ENCODE measurements at regions of chr5 and their contacts with region 1.

Region 1: GRCh38 chr5:6745706-6746222 is 32.5 kb downstream of the TENT4A start:
- DNase-seq: peak; percentile 87
- ATAC-seq: peak; percentile 83
- H3K4me3 ChIP-seq: no peak overlapping the region
- H3K27ac ChIP-seq: no peak overlapping the region
- H3K4me1 ChIP-seq: peaks cover 5% of the 10 kb centered on the region
- H3K27me3 ChIP-seq: no peaks in the 10 kb centered on the region
- CTCF ChIP-seq: peak; percentile 97

Region 2: GRCh38 chr5:6393596-6394194 is 352.1 kb before region 1 on chr5:
- CTCF ChIA-PET with region 1: no interaction called
- POLR2A ChIA-PET with region 1: no interaction called
- intact Hi-C with region 1: no loop called
- DNase-seq: peak; percentile 41
- ATAC-seq: no peak
- H3K4me3 ChIP-seq: no peak overlapping the region
- H3K27ac ChIP-seq: no peak overlapping the region
- H3K4me1 ChIP-seq: no peaks in the 10 kb centered on the region
- H3K27me3 ChIP-seq: peaks cover 3% of the 10 kb centered on the region; the same call in 1 of the 2 replicates
- CTCF ChIP-seq: no peak

Region 3: DNA sequence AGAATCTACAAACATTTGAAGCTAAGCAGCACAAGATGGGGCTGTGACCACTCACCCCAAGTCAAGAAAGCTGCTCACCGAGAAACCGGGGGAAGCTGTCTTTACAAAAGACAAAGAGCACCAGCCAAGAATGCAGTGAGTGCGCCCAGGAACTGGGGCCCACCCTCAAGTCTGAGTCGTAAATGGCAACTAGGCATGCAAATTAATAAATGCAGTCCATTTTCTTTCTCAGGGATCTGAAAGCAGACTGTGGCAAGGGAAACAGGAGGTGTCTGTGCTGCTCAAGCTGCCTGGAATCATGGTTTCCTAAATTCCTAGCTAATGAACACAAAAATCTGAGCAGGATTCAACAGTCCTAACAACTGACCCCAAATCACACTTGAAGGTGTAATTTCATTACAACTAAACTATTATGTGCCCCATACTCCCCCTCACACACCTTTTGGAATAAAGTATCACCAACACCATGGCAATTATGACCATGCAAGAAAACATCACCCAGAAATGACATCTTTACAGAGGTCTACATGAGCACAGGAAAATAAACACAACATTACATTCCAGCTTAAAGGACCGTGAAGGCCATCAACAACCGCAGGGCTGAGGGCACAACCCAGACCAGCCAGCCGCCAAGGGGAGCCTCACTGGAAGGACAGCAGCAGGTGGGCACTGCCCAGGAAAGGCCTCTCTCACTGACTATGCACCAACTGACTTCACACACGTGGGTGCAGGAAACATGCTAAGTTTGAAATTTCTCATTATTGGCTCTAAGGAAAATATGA is 130.5 kb before region 1 on chr5:
- CTCF ChIA-PET with region 1: no interaction called
- POLR2A ChIA-PET with region 1: interaction called, 3 read pairs
- intact Hi-C with region 1: loop called (anchors 5 kb)
- DNase-seq: no peak
- ATAC-seq: no peak
- H3K4me3 ChIP-seq: no peak overlapping the region
- H3K27ac ChIP-seq: no peak overlapping the region
- H3K4me1 ChIP-seq: no peaks in the 10 kb centered on the region
- H3K27me3 ChIP-seq: no peaks in the 10 kb centered on the region
- CTCF ChIP-seq: no peak

Region 4: GRCh38 chr5:6712577-6713275 is 33.0 kb before region 1 on chr5:
- CTCF ChIA-PET with region 1: no interaction called
- POLR2A ChIA-PET with region 1: no interaction called
- intact Hi-C with region 1: loop called (anchors 2 kb)
- DNase-seq: peak; percentile 100
- ATAC-seq: peak; percentile 63
- H3K4me3 ChIP-seq: peak overlapping the region; percentile 73
- H3K27ac ChIP-seq: peak overlapping the region; percentile 86
- H3K4me1 ChIP-seq: peaks cover 33% of the 10 kb centered on the region
- H3K27me3 ChIP-seq: no peaks in the 10 kb centered on the region
- CTCF ChIP-seq: no peak

Measured in PC-3 (cell line).